ENCODE measurements at regions of chr5 and their contacts with region 1.

Region 1: GRCh38 chr5:14351845-14352712 is 208.9 kb downstream of the TRIO start:
- DNase-seq: peak; percentile 82
- H3K4me3 ChIP-seq: no peak overlapping the region
- H3K27ac ChIP-seq: no peak overlapping the region
- H3K4me1 ChIP-seq: peaks cover 0 to 36% (median 22%) of the 10 kb centered on the region in 4 donors
- H3K27me3 ChIP-seq: no peaks in the 10 kb centered on the region
- CTCF ChIP-seq: peak; percentile 43 to 92 (median 80)
- EP300 ChIP-seq: no peak
- POLR2A ChIP-seq: no peak

Region 2: DNA sequence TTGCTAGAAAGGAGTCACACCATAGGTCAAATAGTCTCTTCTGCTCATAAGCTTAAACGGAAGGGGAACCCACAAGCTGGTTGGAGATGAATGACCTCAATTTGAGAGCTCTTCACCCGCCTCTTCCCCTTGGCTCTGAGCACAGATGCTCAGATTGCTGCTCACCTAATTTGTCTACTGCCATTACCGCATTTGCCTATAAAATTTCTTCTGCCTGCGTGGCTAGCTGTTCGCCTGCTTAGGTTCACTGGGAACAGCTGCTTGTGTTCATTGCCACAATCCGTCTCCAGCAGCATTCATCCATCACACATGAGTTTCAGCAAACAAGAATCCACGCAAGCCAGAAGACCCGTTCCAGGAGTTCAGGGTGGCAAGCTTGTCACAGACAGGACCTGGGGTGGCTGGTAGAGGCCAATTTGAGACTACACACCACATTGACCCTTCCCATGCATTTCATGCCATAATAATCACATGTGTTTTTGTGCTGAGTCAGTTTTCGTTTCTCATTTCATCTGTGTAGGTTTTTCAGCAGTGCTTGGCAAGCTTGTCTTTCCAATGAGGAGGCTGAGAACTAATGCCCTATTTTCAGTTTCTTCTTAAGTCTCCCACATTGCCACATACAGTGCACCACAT is 357.3 kb before region 1 on chr5:
- intact Hi-C with region 1: loop called (anchors 5 kb)
- DNase-seq: no peak
- H3K4me3 ChIP-seq: no peak overlapping the region
- H3K27ac ChIP-seq: no peak overlapping the region
- H3K4me1 ChIP-seq: no peaks in the 10 kb centered on the region
- H3K27me3 ChIP-seq: no peaks in the 10 kb centered on the region
- CTCF ChIP-seq: no peak
- EP300 ChIP-seq: no peak
- POLR2A ChIP-seq: no peak

Region 3: DNA sequence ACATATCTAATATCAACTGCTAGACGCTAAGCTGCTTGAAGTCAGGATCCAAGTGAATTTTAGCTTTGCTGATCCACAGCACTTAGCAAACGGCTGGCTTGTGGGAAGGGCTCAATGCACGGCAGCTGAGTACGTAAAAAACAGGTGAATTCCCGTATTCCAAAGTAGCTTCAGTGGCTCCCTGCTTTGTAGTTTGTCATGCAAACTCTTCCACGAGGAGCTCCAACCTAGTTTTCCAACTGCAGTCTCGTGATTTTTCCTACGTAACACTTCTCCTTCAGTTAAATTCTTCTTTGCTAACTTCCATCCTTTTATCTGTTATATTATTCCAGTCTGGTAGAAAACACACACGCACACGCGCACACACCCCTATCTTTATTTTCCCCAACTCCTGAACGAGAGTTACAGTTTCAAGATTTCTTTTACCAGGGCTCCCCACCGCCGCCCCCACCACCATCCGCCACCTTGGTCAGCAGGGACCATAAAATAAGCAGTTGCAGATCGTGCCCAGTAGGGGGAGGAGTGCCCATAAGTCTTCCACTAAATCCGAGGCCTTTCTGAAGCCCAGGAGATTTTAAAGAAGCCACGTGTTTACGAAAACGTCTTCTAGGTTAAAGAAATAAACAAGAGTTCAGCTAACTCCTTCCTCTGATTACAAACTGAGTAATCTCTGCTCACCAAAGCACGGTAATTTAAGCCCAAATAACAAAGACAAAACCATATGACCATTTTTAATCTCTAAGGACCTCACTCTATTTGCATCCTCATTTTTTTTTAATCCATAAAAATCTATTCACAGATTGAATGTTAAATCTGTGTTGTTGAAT is 243.7 kb before region 1 on chr5:
- intact Hi-C with region 1: loop called (anchors 5 kb)
- DNase-seq: peak; percentile 86
- H3K4me3 ChIP-seq: peak overlapping the region in 3 of 4 donors; percentile 25 to 35 (median 30)
- H3K27ac ChIP-seq: peak overlapping the region in 2 of 4 donors; percentile 4 to 38
- H3K4me1 ChIP-seq: peaks cover 0 to 7% (median 2%) of the 10 kb centered on the region in 4 donors
- H3K27me3 ChIP-seq: no peaks in the 10 kb centered on the region
- CTCF ChIP-seq: peak; percentile 37 to 82 (median 60)
- EP300 ChIP-seq: no peak
- POLR2A ChIP-seq: no peak

Region 4: GRCh38 chr5:14281746-14282181 is 70.3 kb before region 1 on chr5:
- intact Hi-C with region 1: no loop called
- DNase-seq: no peak
- H3K4me3 ChIP-seq: no peak overlapping the region
- H3K27ac ChIP-seq: no peak overlapping the region
- H3K4me1 ChIP-seq: peaks cover 0 to 45% (median 21%) of the 10 kb centered on the region in 4 donors
- H3K27me3 ChIP-seq: no peaks in the 10 kb centered on the region
- CTCF ChIP-seq: no peak
- EP300 ChIP-seq: no peak
- POLR2A ChIP-seq: no peak

Region 5: GRCh38 chr5:14399054-14399692 is 47.1 kb after region 1 on chr5:
- intact Hi-C with region 1: no loop called
- DNase-seq: no peak
- H3K4me3 ChIP-seq: no peak overlapping the region
- H3K27ac ChIP-seq: peak overlapping the region in 2 of 4 donors; percentile 33 to 35
- H3K4me1 ChIP-seq: peaks cover 0 to 32% (median 8%) of the 10 kb centered on the region in 4 donors
- H3K27me3 ChIP-seq: no peaks in the 10 kb centered on the region
- CTCF ChIP-seq: peak; percentile 18 to 65 (median 56)
- EP300 ChIP-seq: no peak
- POLR2A ChIP-seq: no peak

Region 6: DNA sequence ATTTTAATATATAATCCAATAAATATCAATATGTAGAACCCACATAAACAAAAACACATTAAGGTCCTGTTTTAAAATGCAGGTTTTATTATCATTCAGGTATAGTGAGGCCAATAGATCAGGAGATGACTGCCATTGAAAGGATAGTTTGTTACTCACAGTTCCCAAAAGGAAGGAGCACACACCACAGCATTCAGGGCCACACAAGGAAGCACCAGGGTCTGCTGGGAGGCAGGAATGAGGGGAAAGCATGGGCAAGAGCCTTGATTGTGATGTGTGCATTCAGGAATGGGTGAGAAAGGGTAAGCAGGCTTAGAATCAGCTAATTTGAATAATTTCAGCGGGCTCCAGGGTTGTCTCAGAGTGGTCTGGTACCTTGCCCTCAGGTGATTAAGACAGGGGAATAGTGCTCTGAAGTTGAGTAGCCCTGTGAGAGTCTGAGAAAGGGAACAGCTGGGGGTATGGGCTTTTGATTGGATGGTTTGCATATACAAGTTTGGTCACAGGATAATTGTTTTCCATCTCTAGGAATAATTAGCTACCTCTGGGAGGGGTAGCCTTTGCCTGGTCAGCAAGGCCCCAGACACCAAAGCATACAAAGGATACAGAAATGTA is 292.7 kb after region 1 on chr5:
- intact Hi-C with region 1: loop called (anchors 5 kb)
- DNase-seq: no peak
- H3K4me3 ChIP-seq: no peak overlapping the region
- H3K27ac ChIP-seq: no peak overlapping the region
- H3K4me1 ChIP-seq: no peaks in the 10 kb centered on the region
- H3K27me3 ChIP-seq: peaks cover 0 to 4% (median 0%) of the 10 kb centered on the region in 3 donors
- CTCF ChIP-seq: no peak
- EP300 ChIP-seq: no peak
- POLR2A ChIP-seq: no peak

Measured in sigmoid colon (tissue), 7 donors.